ENCODE measurements at regions of chr19 and their contacts with region 1.

Region 1: DNA sequence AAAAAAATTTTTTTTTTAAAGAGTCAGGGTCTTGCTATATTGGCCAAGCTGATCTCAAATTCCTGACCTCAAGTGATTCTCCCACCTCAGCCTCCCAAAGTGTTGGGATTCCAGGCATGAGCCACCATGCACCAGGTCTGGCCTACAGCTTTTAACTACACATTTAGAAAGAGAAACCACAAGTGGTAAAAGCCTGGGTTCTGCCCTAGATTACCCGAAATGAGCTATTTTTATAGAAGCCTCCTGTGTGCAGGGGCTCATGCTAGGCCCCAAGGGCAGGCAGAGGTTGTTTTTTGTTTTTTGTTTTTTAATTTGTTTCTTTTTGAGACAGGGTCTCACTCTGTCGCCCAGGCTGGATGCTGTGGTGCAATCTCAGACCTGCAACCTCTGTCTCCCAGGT is 14.0 kb upstream of the MYADM start:
- DNase-seq: no peak
- ATAC-seq: no peak
- H3K4me3 ChIP-seq: no peak overlapping the region
- H3K4me3 Mint-ChIP-seq: no peak overlapping the region
- H3K27ac ChIP-seq: no peak overlapping the region
- H3K27ac Mint-ChIP-seq: no peak overlapping the region
- H3K4me1 ChIP-seq: peaks cover 11% of the 10 kb centered on the region
- H3K4me1 Mint-ChIP-seq: peaks cover 0 to 4% of the 10 kb centered on the region in 2 donors
- H3K27me3 ChIP-seq: no peaks in the 10 kb centered on the region
- H3K27me3 Mint-ChIP-seq: peaks cover 20 to 23% of the 10 kb centered on the region in 2 donors
- CTCF ChIP-seq: no peak

Region 2: GRCh38 chr19:53892981-53893325 is 39.2 kb after region 1 on chr19:
- intact Hi-C with region 1: loop called (anchors 5 kb)
- DNase-seq: no peak
- ATAC-seq: no peak
- H3K4me3 ChIP-seq: no peak overlapping the region
- H3K4me3 Mint-ChIP-seq: no peak overlapping the region
- H3K27ac ChIP-seq: no peak overlapping the region
- H3K27ac Mint-ChIP-seq: no peak overlapping the region
- H3K4me1 ChIP-seq: peaks cover 6% of the 10 kb centered on the region
- H3K4me1 Mint-ChIP-seq: peaks cover 0 to 5% of the 10 kb centered on the region in 2 donors
- H3K27me3 ChIP-seq: peaks cover 3% of the 10 kb centered on the region
- H3K27me3 Mint-ChIP-seq: peaks cover 25 to 39% of the 10 kb centered on the region in 2 donors
- CTCF ChIP-seq: no peak